Calu3 (cell line): ENCODE measurements at regions of chr12 and their contacts with region 1.

Region 1: DNA sequence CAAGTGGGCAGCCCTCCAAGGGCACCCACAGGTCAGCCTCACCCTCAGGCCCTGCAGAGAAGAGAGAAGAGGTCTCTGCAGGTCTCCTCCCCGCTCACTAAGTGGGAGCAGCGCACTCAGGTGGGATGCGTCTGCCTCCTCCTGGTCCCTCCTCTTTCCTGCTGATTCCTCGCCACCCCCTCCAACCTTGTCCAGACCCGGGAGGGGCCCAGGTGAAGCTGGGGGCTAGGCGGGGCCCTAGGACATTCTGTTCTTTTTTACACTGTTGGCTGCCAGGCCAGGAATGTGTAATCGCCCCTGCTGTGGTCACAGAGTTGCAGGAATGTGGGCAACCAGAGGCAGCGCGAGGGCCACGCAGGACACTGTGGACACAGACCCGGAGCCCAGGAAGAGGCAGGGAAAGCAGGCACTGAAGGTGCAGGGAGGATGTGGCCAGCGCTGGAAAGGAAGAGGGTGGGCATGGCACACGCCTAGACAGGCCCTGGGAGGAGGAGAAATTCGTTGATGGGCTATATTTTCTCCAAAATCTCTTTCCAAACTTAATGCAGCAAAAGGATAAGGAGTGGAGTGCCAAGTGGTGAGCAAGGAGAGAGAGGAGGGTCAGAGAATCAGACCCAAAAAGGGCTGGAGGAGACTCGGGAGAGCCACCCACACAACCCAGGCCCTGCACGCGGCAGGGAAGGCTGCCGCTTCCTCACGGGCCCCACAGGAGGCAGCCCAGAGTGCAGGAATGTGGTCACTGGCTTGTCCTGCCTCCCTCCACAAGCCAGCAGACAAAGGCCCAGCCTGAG is 911 bp upstream of the SCNN1A start:
- DNase-seq: peak; percentile 74
- H3K4me3 Mint-ChIP-seq: peak overlapping the region; percentile 67
- H3K27ac Mint-ChIP-seq: peak overlapping the region; percentile 50
- H3K4me1 Mint-ChIP-seq: peaks cover 59% of the 10 kb centered on the region
- H3K27me3 Mint-ChIP-seq: no peaks in the 10 kb centered on the region
- CTCF ChIP-seq: peak; percentile 27

Region 2: GRCh38 chr12:5723711-5724252 is 652.5 kb before region 1 on chr12:
- CTCF ChIA-PET with region 1: no interaction called
- intact Hi-C with region 1: no loop called
- DNase-seq: no peak
- H3K4me3 Mint-ChIP-seq: no peak overlapping the region
- H3K27ac Mint-ChIP-seq: no peak overlapping the region
- H3K4me1 Mint-ChIP-seq: no peaks in the 10 kb centered on the region
- H3K27me3 Mint-ChIP-seq: peaks cover 10% of the 10 kb centered on the region
- CTCF ChIP-seq: no peak

Region 3: DNA sequence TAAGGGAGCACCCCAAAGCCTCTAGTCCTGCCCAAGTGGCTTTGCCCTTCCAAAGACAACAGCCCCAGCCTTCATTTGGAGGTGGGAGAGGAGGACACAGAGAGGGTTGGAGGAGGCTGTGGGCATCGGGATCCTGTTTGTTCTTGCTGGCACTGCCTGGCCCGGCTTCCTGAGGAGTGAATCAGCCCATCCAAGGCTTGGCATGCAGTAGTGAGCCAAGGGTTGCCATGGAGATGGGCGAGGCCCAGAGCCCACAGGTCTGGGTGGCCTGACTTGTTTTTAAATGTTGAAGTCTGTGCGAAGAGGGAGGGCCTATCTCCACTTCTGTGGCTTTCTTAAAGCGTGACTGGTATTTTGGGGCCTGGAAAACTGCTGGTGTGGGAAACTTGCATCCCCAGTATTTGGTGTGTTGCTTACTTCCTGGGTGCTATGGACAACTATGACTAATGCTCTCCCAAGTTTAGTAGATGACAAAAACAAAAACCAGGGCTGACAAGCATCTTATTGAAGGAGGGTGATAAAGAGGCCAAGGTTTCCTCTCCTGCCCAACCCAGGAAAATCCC is 160.3 kb before region 1 on chr12:
- CTCF ChIA-PET with region 1: no interaction called
- intact Hi-C with region 1: loop called (anchors 10 kb)
- DNase-seq: peak; percentile 96
- H3K4me3 Mint-ChIP-seq: peak overlapping the region; percentile 58
- H3K27ac Mint-ChIP-seq: peak overlapping the region; percentile 97
- H3K4me1 Mint-ChIP-seq: peaks cover 59% of the 10 kb centered on the region
- H3K27me3 Mint-ChIP-seq: no peaks in the 10 kb centered on the region
- CTCF ChIP-seq: no peak

Region 4: GRCh38 chr12:6295094-6295811 is 81.0 kb before region 1 on chr12:
- CTCF ChIA-PET with region 1: no interaction called
- intact Hi-C with region 1: loop called (anchors 1 kb)
- DNase-seq: peak; percentile 89
- H3K4me3 Mint-ChIP-seq: peak overlapping the region; percentile 12
- H3K27ac Mint-ChIP-seq: peak overlapping the region; percentile 98
- H3K4me1 Mint-ChIP-seq: peaks cover 48% of the 10 kb centered on the region
- H3K27me3 Mint-ChIP-seq: no peaks in the 10 kb centered on the region
- CTCF ChIP-seq: no peak

Region 5: GRCh38 chr12:6323340-6323994 is 52.8 kb before region 1 on chr12:
- CTCF ChIA-PET with region 1: interaction called, 5 read pairs
- intact Hi-C with region 1: loop called (anchors 10 kb)
- DNase-seq: peak; percentile 58
- H3K4me3 Mint-ChIP-seq: no peak overlapping the region
- H3K27ac Mint-ChIP-seq: peak overlapping the region; percentile 56
- H3K4me1 Mint-ChIP-seq: peaks cover 23% of the 10 kb centered on the region
- H3K27me3 Mint-ChIP-seq: no peaks in the 10 kb centered on the region
- CTCF ChIP-seq: peak; percentile 35

Region 6: DNA sequence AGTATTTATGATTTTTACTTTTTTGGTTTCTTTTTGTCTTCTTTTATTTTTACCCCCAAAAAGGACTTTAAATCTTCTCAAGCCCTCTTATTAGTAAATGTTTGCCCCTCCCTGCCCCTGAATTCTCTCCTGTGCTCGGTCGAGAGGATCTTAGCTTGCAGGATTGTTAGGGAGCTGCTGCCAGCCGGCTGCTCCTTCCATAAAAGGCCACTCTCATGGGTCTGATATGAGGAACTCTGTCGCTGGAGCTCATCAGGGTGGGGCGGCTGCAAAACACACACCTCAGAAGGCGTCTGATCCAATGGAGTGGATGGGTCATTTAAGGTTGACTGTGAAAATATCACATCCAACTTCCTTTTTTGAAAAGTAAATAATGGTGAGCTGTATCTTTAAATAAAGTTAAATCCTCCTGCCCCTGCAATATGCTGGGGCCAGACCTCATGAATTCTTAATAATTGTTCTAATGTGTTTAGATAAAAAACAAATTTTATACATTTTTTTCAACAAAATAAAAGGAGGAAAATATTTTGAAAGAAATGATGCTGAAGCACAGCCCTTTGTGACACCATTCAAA is 16.3 kb after region 1 on chr12:
- CTCF ChIA-PET with region 1: no interaction called
- intact Hi-C with region 1: no loop called
- DNase-seq: no peak
- H3K4me3 Mint-ChIP-seq: no peak overlapping the region
- H3K27ac Mint-ChIP-seq: no peak overlapping the region
- H3K4me1 Mint-ChIP-seq: peaks cover 27% of the 10 kb centered on the region
- H3K27me3 Mint-ChIP-seq: no peaks in the 10 kb centered on the region
- CTCF ChIP-seq: no peak